ENCODE measurements at regions of chr20 and their contacts with region 1.

Region 1: DNA sequence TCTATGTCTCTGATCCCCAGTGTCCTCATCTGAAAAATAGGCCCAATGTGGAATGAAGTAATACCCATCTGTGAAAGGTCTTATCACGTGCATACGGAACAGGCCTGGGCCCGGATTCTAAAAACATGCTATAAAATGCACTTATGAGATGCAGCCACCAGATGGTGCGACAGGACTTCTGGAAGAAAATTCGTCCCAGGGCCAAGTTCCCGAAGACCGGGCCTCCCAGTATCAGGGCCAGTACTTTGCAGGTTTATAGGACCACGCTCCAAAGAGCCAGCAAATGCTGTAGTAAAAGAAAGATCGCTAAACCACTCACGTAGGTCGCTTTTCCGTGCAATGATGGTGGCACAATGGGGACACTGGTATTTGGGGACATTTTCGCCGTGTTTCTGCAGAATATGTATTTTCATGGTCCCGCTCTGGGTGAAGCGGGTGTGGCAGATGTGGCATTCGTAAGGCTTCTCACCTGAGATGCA is 10.6 kb downstream of the CTCFL start:
- DNase-seq: peak; percentile 63 to 77 (median 74)
- ATAC-seq: peak; percentile 92 to 97 (median 94)
- H3K4me3 ChIP-seq: no peak overlapping the region
- H3K27ac ChIP-seq: no peak overlapping the region
- H3K4me1 ChIP-seq: no peaks in the 10 kb centered on the region
- H3K27me3 ChIP-seq: no peaks in the 10 kb centered on the region
- CTCF ChIP-seq: peak; percentile 76 to 86 (median 79)
- POLR2A ChIP-seq: no peak

Region 2: DNA sequence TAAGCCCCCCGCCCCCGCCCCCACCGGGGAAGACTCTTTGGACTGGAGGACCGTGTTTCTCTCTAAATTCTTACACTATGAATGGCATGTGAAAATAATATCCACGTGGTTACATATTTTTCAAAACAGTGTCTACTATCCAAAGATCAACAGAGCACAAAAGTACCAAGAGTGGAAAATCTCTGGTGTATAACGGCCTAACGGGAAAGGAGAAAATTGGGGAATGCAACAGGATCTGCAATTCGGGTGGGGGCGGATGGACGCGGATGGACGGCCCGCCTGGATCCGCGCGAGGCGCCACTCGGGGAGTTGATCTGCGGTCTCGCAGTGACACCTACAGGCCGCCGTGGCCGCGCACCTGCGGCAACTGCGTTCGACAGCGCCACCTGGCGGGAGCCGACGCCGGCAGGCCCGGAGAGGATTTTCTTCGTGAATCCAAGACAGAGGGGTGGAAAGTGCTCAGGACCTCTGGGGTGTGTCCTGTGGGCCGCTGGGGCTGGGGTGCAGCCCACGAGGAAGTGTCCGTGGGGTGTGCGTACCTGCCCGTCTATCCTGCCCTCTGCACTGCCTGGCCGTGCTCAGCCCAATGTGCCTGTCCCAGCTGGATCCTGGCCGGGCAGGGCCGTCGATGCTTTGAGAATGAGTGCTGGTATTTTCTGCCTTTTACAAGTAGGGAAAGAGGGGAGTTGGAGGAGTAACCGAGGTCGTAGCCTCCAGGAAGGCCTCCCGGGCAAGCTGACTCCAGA is 695.5 kb after region 1 on chr20:
- intact Hi-C with region 1: loop called in 1 of 2 experiments (anchors 10 kb)
- DNase-seq: peak; percentile 81 to 89 (median 86)
- ATAC-seq: peak; percentile 94 to 99 (median 98)
- H3K4me3 ChIP-seq: no peak overlapping the region
- H3K27ac ChIP-seq: no peak overlapping the region
- H3K4me1 ChIP-seq: no peaks in the 10 kb centered on the region
- H3K27me3 ChIP-seq: no peaks in the 10 kb centered on the region
- CTCF ChIP-seq: peak; percentile 100
- POLR2A ChIP-seq: no peak